Mammary epithelial cell (primary cell): ENCODE measurements at regions of chr3 and their contacts with region 1.

Region 1: GRCh38 chr3:177448987-177449975 is 252.0 kb upstream of the TBL1XR1 start:
- DNase-seq: peak; percentile 100
- H3K4me3 ChIP-seq: no peak overlapping the region
- H3K27ac ChIP-seq: peak overlapping the region; percentile 99
- H3K4me1 ChIP-seq: peaks cover 51% of the 10 kb centered on the region
- H3K27me3 ChIP-seq: no peaks in the 10 kb centered on the region
- CTCF ChIP-seq: no peak

Region 2: DNA sequence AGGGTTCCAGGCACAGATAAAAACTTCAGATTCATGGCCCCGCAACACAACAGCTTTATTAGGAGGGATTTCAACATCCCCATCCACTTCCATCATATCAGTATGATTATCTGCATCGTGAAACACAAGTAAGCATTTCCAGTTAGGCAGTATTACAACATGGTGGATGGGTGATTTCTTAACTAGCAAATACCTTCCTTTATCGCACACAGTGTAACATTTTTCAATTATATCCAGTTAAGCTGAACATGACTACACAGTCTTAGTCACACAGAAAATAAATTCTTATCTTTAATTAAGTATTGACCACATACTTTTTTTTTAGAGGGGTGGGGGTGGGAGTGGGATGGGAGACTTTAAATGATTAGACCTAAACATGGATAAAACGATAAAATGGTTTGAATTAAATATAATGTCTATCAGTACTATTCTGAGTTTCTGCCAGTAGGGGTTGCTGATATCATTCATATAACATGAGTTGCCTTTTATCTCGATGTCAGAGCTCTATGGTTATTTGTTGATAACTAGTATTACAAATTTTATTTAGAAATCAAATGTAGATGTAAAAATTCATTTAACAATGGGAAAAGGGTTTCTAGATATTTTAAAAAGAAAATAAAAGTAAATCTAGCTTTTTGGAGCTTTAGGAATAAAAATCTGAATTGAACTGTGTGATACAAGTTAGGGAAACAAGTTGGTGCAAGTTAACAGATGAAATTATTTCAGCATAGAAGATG is 398.6 kb before region 1 on chr3:
- CTCF ChIA-PET with region 1: no interaction called
- dilution Hi-C with region 1: no loop called
- in situ Hi-C with region 1: no loop called
- intact Hi-C with region 1: loop called (anchors 1 kb)
- DNase-seq: peak; percentile 24
- H3K4me3 ChIP-seq: no peak overlapping the region
- H3K27ac ChIP-seq: peak overlapping the region; percentile 22
- H3K4me1 ChIP-seq: peaks cover 8% of the 10 kb centered on the region
- H3K27me3 ChIP-seq: no peaks in the 10 kb centered on the region
- CTCF ChIP-seq: peak; percentile 40 to 54

Region 3: DNA sequence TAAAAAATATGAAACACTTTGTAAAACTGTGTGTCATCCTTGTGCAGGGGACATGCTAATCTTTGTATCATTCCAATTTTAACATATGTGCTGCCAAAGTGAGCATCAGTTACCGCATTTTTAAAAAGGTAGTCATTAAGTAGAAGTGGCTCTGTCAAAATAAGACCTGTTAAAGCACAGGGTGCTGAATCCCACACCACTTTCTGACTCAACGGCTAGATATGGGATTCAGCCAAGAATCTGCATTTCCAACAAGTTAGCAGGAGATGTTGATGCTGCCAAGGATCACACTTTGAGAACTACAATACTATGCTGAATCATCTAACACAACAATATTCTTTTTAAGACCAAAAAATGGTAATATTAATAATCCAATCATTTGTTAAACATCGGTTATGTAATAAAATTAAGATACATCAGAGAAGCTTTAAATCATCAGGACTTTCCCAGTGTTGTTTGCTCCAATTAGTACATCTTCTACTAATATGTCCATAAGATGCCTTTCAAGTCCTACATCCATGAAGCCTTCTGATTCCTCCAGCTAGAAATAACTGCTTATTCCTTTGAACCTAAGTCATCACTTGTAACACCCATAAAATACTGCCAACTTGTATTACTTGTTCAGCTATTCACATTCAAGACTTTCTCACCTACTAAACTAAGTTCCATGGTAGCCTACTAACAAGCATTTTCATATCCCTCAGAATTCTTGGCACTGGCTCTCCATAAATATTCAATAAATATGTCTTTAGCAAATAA is 323.1 kb before region 1 on chr3:
- CTCF ChIA-PET with region 1: no interaction called
- dilution Hi-C with region 1: no loop called
- in situ Hi-C with region 1: no loop called
- intact Hi-C with region 1: loop called (anchors 5 kb)
- DNase-seq: peak; percentile 90
- H3K4me3 ChIP-seq: no peak overlapping the region
- H3K27ac ChIP-seq: no peak overlapping the region
- H3K4me1 ChIP-seq: peaks cover 21% of the 10 kb centered on the region
- H3K27me3 ChIP-seq: no peaks in the 10 kb centered on the region
- CTCF ChIP-seq: no peak

Region 4: DNA sequence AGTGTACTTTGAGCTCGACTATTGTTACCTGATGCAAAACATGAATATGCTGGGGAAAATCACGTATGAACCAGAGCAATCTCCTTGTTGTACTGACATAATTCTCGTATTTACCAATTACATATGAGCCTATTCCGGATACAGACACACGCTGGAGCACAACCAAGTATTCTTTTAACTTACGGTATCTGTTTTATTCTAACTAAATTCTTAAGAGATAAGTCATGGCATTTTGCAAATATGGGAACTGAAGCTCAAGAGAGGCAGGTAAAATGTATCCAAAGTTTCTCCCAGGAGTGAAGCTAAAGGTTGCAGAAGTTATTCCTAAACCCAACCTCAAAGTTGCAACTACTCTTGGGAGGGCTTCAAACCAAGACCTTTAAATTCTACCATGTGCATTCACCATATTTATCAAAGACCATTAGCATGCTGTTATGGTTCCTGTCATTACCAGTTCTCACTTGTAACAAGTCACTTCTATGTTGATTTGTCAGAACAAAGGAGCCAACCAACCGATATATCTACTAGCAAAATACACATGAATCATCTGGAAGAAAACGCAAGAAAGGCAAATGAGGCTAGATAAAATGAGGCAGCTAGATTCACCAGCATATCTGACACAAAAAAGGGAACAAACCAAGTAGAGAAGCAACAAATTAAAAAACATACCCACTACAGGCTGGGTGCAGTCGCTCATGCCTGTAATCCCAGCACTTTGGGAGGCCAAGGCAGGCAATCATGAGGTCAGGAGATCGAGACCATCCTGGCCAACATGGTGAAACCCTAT is 269.8 kb before region 1 on chr3:
- CTCF ChIA-PET with region 1: no interaction called
- dilution Hi-C with region 1: no loop called
- in situ Hi-C with region 1: loop called in 1 of 2 experiments (anchors 25 kb)
- intact Hi-C with region 1: loop called (anchors 5 kb)
- DNase-seq: no peak
- H3K4me3 ChIP-seq: no peak overlapping the region
- H3K27ac ChIP-seq: no peak overlapping the region
- H3K4me1 ChIP-seq: peaks cover 34% of the 10 kb centered on the region
- H3K27me3 ChIP-seq: no peaks in the 10 kb centered on the region
- CTCF ChIP-seq: no peak

Region 5: GRCh38 chr3:177294221-177294620 is 155.1 kb before region 1 on chr3:
- CTCF ChIA-PET with region 1: no interaction called
- dilution Hi-C with region 1: no loop called
- in situ Hi-C with region 1: no loop called
- intact Hi-C with region 1: loop called (anchors 2 kb)
- DNase-seq: peak; percentile 96
- H3K4me3 ChIP-seq: no peak overlapping the region
- H3K27ac ChIP-seq: peak overlapping the region; percentile 98
- H3K4me1 ChIP-seq: peaks cover 23% of the 10 kb centered on the region
- H3K27me3 ChIP-seq: no peaks in the 10 kb centered on the region
- CTCF ChIP-seq: no peak

Region 6: DNA sequence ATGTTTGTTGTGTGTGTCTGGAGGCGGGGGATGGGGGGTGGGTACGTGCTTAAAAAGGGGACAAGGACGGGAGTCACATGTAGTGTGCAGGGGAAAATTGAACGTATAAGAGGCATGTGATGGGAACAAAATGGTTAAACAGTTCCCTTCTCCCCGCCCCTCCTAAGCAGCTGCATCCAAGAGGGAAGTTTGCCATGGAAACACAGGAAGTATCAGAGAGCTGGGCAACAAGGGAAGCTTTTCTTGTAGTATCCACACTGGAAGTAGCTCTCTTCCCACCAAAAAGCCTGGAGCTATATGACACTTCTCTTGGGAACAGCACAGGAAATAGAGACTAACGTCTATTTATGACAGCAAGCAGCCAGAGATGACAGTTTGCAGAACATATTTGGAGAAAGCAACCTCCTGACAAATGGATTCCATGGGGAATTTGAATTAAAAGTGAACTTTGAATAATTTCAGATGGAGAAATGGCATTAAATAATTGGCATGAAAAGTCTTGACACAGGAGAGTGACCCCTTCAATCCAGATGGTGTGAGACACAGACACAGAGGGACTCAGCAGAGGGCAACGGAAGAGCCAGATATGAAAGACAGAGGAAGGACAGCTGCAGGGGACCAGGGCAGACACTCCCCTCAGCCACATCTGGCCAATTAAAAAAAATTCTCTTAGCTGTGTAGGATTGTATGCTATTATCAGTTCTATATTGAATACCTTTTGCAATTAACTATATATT is 42.2 kb after region 1 on chr3:
- CTCF ChIA-PET with region 1: no interaction called
- dilution Hi-C with region 1: no loop called
- in situ Hi-C with region 1: no loop called
- intact Hi-C with region 1: no loop called
- DNase-seq: peak; percentile 32
- H3K4me3 ChIP-seq: no peak overlapping the region
- H3K27ac ChIP-seq: no peak overlapping the region
- H3K4me1 ChIP-seq: peaks cover 15% of the 10 kb centered on the region
- H3K27me3 ChIP-seq: no peaks in the 10 kb centered on the region
- CTCF ChIP-seq: no peak

Region 7: DNA sequence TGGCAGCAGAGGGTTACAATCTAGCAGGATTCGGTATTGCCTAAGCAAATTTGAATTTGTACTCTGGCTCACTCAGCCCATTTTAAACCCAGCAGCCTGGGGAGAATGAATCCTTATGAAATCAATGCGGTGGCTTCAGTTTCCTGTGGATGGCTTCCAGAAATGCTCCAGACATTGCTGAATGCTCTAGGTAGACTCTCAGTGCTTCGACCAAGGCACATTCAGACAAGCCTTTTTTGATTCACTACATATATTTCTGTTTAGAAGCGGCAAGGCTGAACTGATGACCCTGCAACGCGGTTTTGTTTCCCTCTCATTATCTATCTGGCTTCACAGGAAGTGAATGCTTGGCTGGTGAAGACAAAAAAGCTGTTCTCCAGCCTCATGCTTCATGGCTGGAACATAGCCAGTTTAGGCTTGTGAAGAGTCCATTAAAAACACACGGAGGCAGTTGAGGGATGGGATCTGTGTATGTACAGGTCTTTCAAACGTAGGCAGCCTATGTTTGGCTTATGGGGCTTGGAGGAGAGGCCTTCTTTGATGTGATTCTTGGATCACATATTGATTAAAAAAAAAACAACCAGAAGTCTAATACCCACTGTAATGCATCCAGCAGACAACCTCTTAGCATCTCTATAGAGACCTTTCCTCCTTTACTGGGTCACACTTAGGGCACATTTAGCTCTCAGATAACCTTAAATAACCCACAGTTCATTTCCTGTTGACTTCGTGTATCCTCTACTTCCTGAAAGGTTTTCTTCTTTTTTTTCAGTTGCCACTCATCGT is 148.2 kb after region 1 on chr3:
- CTCF ChIA-PET with region 1: no interaction called
- dilution Hi-C with region 1: no loop called
- in situ Hi-C with region 1: loop called in 1 of 2 experiments (anchors 10 kb)
- intact Hi-C with region 1: loop called (anchors 1 kb)
- DNase-seq: peak; percentile 91
- H3K4me3 ChIP-seq: no peak overlapping the region
- H3K27ac ChIP-seq: peak overlapping the region; percentile 89
- H3K4me1 ChIP-seq: peaks cover 77% of the 10 kb centered on the region
- H3K27me3 ChIP-seq: no peaks in the 10 kb centered on the region
- CTCF ChIP-seq: no peak

Region 8: DNA sequence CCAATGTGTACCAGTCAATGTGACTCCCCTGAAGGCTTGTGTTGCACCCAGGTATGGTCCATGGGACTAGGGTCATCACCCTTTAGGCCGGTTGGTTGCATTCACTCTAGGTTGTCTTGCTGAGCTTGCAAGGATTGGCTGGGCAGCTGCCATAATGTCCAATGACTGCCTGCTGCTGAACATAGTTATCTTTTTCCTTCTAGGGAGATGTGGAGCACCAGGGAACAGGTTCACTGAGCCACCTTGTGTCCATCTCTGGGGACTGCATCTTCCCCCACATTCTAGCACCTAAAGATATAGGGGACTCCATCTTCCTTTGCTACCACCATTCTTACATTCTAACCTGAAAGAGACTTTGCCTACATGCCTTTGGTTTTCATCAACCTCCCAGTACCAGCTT is 328.4 kb after region 1 on chr3:
- CTCF ChIA-PET with region 1: no interaction called
- dilution Hi-C with region 1: no loop called
- in situ Hi-C with region 1: loop called in 1 of 2 experiments (anchors 25 kb)
- intact Hi-C with region 1: loop called (anchors 1 kb)
- DNase-seq: peak; percentile 68
- H3K4me3 ChIP-seq: no peak overlapping the region
- H3K27ac ChIP-seq: no peak overlapping the region
- H3K4me1 ChIP-seq: peaks cover 25% of the 10 kb centered on the region
- H3K27me3 ChIP-seq: no peaks in the 10 kb centered on the region
- CTCF ChIP-seq: peak; percentile 77 to 84